ENCODE measurements at regions of chr1 and their contacts with region 1.

Region 1: DNA sequence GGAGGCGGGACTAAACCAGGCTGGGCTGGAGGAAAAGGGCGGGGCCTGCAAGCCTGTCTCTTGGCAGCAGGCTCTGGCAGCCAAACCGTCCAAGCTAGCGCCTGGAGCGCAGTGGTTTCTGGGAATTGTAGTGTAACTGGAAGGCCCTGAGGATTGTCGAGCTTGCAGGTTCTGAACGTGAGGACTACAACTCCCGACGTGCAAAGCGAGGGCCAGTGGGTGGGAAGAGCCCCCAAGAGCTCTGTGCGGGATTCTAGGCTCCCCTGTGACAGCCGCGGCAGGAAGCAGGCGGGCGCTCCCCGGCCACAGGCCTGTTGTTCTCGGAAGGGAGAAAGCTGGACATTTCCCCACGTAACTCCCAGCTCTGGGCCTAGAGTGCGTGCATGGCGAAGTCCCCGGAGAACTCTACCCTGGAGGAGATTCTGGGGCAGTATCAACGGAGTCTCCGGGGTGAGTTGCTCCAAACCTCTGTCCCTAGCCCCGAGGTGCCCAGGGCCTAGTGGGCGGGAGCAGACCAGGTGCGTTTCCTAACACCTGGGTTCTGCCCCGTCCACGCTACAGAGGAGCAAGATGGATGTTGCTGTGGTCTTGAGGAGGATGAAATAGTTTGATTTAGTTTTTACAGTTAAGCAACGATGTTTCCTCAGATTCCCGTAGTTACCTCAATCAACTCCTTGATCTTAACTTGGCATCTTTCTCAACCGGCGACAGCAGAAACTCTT is at the start of gene SDCCAG8:
- DNase-seq: peak; percentile 94
- H3K4me3 Mint-ChIP-seq: peak within 1 kb of the TSS; percentile 95
- H3K27ac Mint-ChIP-seq: peak within 1 kb of the TSS; percentile 99
- H3K4me1 Mint-ChIP-seq: peaks cover 36% of the 10 kb centered on the region
- H3K27me3 Mint-ChIP-seq: no peaks in the 10 kb centered on the region
- total RNA-seq, gene SDCCAG8: 14.6 and 17.6 TPM in 2 replicates

Region 2: DNA sequence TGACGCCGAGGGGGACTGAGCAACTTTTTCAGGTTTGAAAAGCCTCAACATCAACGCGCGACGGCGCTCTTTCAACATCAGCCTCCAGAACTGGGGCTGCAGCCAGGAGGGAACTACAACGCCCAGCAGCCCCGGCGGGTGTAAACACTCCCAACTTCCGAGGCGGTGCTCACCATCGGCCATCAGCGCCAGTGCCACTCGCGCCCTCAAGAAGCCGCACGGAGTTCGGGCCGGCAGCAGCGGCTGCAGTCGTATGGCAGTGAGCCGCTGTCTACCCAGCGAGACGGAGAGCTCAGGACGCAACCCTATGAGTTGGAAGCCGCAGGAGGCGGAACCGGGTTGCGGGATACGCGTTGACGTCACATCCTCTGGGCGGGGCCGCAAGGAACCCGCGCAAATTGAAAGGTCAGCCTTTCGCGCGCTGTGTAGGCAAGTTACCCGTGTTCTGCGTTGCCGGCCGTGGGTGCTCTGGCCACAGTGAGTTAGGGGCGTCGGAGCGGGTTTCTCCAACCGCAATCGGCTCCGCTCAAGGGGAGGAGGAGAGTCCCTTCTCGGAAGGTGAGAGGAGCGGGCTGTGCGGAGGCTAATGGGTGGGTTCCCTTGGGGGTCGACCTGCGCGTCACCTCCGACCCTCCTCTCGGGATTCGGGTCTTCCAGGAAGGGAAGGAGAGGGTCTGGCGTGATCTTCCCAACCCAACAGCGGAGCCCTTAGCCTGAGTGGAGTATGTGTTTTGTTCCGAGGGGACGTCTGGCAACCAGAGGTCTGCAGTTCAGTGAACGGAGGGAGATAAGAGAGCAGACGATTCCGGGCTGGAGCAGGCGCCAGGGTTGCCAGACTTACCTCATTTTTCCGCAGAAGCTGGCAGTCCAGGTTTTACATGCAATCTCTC is 1407.9 kb before region 1 on chr1 and contains the start of gene EXO1:
- intact Hi-C with region 1: loop called (anchors 1 kb)
- DNase-seq: peak; percentile 85
- H3K4me3 Mint-ChIP-seq: peak within 1 kb of the TSS; percentile 97
- H3K27ac Mint-ChIP-seq: peak within 1 kb of the TSS; percentile 98
- H3K4me1 Mint-ChIP-seq: peaks cover 36% of the 10 kb centered on the region
- H3K27me3 Mint-ChIP-seq: peaks cover 2% of the 10 kb centered on the region
- total RNA-seq, gene EXO1: 52.2 and 58.0 TPM in 2 replicates

Region 3: DNA sequence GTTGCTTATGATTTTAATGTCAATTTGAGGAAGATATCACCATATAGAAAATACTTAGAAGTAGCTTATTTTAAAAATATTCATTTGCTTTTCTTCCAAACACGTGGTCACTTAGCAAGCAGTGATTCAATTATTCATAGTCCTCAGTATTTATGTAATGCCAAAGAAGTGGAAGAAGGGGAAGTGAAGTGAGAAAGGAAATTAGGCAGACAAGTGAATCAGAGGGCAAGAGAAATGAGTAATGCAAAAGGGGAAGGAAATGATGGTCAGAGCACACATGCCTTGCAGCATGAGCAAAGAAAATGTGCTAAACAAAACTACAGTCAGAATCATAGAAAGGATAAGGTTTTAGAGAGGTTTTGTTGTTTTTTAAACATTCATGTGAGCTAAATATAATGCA is 31.7 kb after region 1 on chr1:
- intact Hi-C with region 1: loop called (anchors 1 kb)
- DNase-seq: no peak
- H3K4me3 Mint-ChIP-seq: no peak overlapping the region
- H3K27ac Mint-ChIP-seq: peak overlapping the region; percentile 24
- H3K4me1 Mint-ChIP-seq: peaks cover 25% of the 10 kb centered on the region
- H3K27me3 Mint-ChIP-seq: no peaks in the 10 kb centered on the region

Region 4: DNA sequence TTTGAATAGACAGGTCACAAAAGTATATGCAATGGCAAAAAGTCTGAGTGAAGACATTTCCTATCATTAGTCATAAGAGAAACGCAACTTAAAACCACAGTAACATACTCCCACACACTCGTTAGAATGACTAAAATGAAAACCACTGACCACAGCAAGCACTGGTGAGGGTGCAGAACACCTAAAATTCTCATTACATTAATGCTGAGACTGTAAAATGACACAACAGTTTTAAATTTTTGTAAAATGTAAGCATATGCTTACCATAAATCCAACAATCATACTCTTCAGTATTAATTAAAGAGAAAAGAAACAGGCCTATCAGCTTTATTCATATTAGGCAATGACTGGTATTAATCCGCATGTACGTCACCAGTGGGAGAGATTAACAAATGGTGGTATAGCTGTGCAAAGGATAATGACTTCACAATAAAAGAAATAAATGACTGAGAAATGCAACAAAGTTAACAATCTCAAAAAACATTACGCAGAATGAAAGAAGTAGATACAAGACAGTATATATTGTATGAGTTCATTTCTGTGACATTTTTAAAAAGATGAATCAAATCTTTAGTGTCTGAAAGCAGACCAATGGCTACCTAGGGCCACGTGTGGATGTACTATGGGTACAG is 340.6 kb after region 1 on chr1:
- intact Hi-C with region 1: loop called (anchors 1 kb)
- DNase-seq: peak; percentile 32
- H3K4me3 Mint-ChIP-seq: peak overlapping the region; percentile 75
- H3K27ac Mint-ChIP-seq: peak overlapping the region; percentile 94
- H3K4me1 Mint-ChIP-seq: peaks cover 32% of the 10 kb centered on the region
- H3K27me3 Mint-ChIP-seq: no peaks in the 10 kb centered on the region

Region 5: DNA sequence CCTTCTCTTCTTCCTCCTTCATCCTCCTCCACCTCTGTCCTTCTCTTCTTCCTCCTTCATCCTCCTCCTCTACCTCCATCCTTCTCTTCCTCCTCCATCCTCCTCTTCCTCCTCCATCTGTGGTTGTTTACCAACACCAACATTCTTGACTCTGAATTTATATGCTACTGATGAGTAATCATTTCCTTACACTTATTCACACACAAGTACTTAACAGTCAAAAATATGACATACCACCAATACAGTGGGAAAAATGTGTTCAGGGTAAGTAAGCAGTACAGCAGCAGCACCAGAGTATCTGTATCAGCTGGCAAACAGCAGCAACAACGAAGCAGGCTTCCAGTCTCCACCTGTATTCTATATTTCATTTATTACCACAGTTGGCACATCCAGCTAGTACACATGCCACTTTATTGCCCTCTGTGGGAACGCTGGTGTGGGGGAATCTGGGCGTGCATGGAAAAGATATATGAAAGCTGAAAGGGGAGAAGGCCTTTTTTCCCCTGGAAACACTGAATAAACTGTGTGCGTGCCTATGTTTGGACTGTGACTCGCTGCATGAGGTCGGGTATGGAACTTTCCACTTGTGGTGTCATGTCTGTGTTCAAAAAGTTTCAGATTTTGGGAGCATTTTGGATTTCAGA is 1179.7 kb after region 1 on chr1:
- intact Hi-C with region 1: loop called (anchors 5 kb)
- DNase-seq: no peak
- H3K4me3 Mint-ChIP-seq: peak overlapping the region; percentile 76
- H3K27ac Mint-ChIP-seq: peak overlapping the region; percentile 97
- H3K4me1 Mint-ChIP-seq: peaks cover 38% of the 10 kb centered on the region
- H3K27me3 Mint-ChIP-seq: no peaks in the 10 kb centered on the region

Region 6: DNA sequence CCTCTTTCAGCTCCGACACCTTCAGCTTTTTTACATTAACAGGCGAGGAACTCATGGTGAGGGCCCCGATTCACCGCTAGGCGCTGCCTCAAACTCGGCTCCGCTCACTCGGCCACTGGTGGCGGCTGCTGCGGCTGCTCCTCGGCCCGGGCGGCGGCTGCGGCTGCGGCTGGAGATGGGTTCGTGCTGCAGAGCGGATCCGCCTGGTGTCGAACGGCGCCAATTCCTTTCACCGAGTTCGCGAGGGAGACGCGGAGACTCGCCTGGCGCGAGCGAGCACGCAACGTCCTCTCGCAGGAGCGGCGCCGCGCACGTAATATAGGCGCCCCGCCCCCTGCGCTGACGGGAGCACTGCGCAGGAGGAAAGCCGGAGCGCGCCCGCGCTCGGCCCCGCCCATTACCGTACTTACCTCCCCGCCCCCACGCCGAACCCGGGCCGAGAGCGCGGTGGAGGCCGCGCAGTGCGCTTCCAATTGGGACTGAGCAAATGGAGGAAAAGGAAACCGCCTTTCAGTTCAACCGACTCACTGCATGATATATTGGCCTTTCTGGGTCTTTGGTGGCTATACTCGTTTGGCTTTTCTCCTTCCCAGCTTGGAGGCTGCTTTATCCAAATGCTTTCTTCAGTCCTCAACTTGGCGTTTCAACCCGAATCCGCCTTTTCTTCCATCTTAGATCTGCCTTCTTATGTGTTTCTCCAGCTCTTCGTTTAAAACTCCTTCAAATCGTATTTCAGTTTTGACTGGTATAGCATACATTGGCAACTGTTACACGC is 1608.5 kb after region 1 on chr1 and contains the start of gene HNRNPU:
- intact Hi-C with region 1: loop called (anchors 5 kb)
- DNase-seq: peak; percentile 97
- H3K4me3 Mint-ChIP-seq: peak within 1 kb of the TSS; percentile 87
- H3K27ac Mint-ChIP-seq: peak within 1 kb of the TSS; percentile 95
- H3K4me1 Mint-ChIP-seq: peaks cover 41% of the 10 kb centered on the region
- H3K27me3 Mint-ChIP-seq: no peaks in the 10 kb centered on the region
- total RNA-seq, gene HNRNPU: 566 and 573 TPM in 2 replicates

Measured in activated T-helper 1 cell treated with anti-CD3 and anti-CD28 coated beads, Interleukin-12 subunit alpha, Interleukin-12 subunit beta, Interleukin-2, Interleukin-4 antibody, amounts not matched to agents 30 ng/mL and 10 ng/mL and 1 ng/mL, durations not matched to agents 14 hours and 24 hours and 36 hours (primary cell).